ENCODE measurements at regions of chr3 and their contacts with region 1.

Region 1: GRCh38 chr3:20222274-20222673 is 36.3 kb upstream of the SGO1 start:
- DNase-seq: no peak
- H3K4me3 ChIP-seq: no peak overlapping the region
- H3K27ac ChIP-seq: no peak overlapping the region
- H3K27me3 ChIP-seq: no peaks in the 10 kb centered on the region
- CTCF ChIP-seq: no peak

Region 2: GRCh38 chr3:20040476-20041196 is 181.6 kb before region 1 on chr3:
- CTCF ChIA-PET with region 1: interaction called, 10 read pairs
- POLR2A ChIA-PET with region 1: no interaction called
- DNase-seq: no peak
- H3K4me3 ChIP-seq: peak overlapping the region; percentile 76
- H3K27ac ChIP-seq: no peak overlapping the region
- H3K27me3 ChIP-seq: no peaks in the 10 kb centered on the region
- CTCF ChIP-seq: no peak; the same call in 1 of the 2 replicates

Region 3: DNA sequence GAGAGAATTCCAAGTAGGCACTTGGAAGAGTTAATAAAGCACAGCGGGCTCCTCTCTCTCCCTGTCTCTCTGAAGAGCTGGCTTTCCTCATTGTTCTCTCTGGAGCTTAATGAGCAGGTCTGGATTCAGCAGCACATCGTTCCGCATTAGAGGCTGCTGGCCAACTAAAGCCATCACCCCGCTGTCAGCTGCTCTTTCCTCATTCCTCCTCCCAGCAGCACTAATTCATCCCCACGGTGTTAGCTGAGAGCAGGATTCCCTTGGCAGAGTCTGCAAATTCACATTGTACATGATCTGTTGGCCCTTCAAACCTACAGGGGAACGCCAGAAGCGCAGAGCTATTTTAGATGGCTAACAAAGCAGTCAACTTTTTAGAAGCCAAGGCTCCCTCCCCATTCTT is 80.4 kb before region 1 on chr3:
- CTCF ChIA-PET with region 1: no interaction called
- POLR2A ChIA-PET with region 1: no interaction called
- DNase-seq: no peak
- H3K4me3 ChIP-seq: no peak overlapping the region
- H3K27ac ChIP-seq: no peak overlapping the region
- H3K27me3 ChIP-seq: no peaks in the 10 kb centered on the region
- CTCF ChIP-seq: no peak